ENCODE measurements at regions of chr22 and their contacts with region 1.

Region 1: GRCh38 chr22:22207845-22208564 is 36.6 kb upstream of the VPREB1 start:
- DNase-seq: peak; percentile 84
- CTCF ChIP-seq: peak; percentile 78

Region 2: DNA sequence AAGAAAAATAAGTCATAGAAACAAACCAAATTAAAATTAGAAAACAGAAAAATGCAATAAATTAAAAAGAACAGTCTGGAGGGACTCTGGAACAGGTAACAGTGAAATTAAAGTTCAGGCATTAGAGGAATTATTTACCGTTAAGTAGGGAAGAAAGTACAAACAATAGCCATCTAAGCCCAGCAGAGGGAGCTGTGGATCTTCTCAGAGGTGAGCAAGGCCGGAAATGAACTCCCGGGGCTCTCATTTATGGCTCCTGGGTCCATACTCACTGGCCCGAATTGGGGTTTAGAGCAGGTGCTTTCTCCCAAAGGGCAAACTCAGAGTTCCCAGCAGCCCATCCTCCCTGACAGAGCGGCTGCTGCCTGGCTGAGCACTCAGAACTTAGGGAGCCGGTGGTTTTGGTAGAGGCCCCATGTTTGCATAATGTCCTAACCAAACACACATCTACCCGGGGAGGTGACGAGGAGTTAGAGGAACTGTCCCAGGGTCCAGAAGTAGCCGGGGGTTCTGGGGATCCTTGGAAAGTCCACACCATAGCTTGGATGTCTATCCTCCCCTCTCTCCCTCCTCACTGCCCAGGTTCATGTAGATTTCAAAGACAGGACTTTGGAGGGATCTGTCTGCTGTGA is 51.2 kb before region 1 on chr22:
- CTCF ChIA-PET with region 1: interaction called, 55 read pairs
- POLR2A ChIA-PET with region 1: no interaction called
- DNase-seq: peak; percentile 87
- CTCF ChIP-seq: peak; percentile 65

Region 3: GRCh38 chr22:22181341-22181850 is 26.6 kb before region 1 on chr22:
- CTCF ChIA-PET with region 1: interaction called, 42 read pairs
- POLR2A ChIA-PET with region 1: no interaction called
- DNase-seq: no peak
- CTCF ChIP-seq: no peak

Region 4: GRCh38 chr22:22195265-22196017 is 12.6 kb before region 1 on chr22:
- CTCF ChIA-PET with region 1: interaction called, 68 read pairs
- POLR2A ChIA-PET with region 1: no interaction called
- DNase-seq: peak; percentile 87
- CTCF ChIP-seq: peak; percentile 91

Region 5: GRCh38 chr22:22226448-22227187 is 18.6 kb after region 1 on chr22:
- CTCF ChIA-PET with region 1: interaction called, 350 read pairs
- POLR2A ChIA-PET with region 1: no interaction called
- DNase-seq: no peak
- CTCF ChIP-seq: no peak

Region 6: GRCh38 chr22:22235558-22235957 is 27.6 kb after region 1 on chr22:
- CTCF ChIA-PET with region 1: interaction called, 350 read pairs
- POLR2A ChIA-PET with region 1: no interaction called
- DNase-seq: peak; percentile 70
- CTCF ChIP-seq: peak; percentile 70

Region 7: DNA sequence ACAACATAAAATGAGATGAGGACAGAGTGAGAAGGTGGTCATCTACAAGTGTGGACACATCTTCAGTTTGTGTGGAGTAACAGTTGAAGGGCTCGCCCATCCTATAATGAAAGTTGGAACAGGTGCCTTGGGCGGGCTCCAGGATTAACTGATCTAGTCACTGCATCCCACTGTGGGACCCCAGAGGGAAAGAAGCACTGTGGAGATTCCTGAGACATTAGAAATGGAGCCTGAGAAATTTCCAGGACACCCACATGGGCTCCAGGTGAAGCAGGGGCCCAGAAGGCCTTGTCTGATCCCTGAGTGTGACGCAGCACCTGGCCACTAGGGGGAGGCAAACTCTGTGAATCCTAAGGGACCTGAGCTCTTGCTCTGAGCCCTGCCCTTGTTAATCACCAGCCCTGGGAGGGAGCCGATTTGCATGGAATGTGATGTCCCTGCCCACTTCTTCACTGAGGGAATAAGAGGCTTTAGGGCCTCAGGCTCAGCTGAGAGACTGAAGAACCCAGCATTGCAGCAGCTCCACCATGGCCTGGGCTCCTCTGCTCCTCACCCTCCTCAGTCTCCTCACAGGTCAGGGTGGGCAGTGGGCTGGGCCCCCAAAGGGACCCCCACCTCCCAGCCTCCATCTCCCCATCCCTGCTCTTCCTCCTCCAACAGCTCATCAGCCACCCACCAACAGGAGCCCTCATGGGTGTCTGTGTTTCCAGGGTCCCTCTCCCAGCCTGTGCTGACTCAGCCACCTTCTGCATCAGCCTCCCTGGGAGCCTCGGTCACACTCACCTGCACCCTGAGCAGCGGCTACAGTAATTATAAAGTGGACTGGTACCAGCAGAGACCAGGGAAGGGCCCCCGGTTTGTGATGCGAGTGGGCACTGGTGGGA is 134.9 kb after region 1 on chr22:
- CTCF ChIA-PET with region 1: interaction called, 11 read pairs
- POLR2A ChIA-PET with region 1: no interaction called
- DNase-seq: peak; percentile 79
- CTCF ChIP-seq: peak; percentile 81

Region 8: GRCh38 chr22:22463855-22464540 is 256.0 kb after region 1 on chr22:
- CTCF ChIA-PET with region 1: no interaction called
- POLR2A ChIA-PET with region 1: no interaction called
- DNase-seq: peak; percentile 58
- CTCF ChIP-seq: peak; percentile 60